ENCODE measurements at regions of chr1 and their contacts with region 1.

Region 1: DNA sequence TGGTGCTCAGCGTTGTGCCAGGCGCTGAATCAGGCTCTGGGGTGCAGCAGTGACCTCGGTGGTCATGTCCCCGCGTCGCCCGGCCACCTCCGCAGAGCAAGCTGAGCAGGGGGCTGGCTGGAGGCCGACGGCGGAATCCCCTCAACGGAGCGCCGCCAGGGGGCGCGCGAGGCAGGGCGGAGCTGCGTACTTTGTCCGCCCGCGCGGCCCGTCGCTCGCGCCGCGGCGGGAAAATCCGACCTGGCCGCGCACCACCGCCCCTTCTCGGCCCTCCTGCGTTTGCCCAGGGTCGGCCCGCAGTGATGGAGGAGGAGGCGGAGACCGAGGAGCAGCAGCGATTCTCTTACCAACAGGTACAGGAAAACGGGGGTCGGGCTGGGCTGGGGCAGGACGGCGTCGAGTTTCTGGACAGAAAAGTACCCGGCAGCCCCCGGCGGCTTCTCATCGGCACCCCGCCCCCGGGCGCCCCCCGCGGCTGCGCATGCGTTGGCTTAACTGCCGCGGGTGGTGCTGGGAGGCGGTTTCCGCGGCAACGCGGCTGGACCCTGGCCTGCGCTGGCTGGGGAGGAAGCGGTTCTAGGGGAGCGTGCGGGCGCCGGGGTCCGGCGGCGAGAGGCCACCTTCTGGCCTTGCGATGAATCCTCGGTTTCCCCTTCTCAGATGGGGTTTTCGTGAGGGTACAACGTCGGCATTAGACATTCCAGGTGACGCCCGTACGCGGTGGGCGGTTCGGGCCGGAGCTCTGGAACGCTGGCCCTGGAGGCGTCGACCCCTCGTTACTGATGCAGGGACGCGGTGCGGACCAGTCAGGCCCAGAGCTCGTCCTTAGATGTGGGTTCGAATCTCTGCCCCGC is at the start of gene CENPS:
- DNase-seq: peak; percentile 83
- H3K4me3 ChIP-seq: peak within 1 kb of the TSS; percentile 66 to 86
- H3K27ac ChIP-seq: peak within 1 kb of the TSS; percentile 66 to 74
- H3K4me1 ChIP-seq: peaks cover 5% of the 10 kb centered on the region
- H3K27me3 ChIP-seq: no peaks in the 10 kb centered on the region
- CTCF ChIP-seq: peak; percentile 98 to 99 (median 98)
- POLR2A ChIP-seq: peak; percentile 33
- total RNA-seq, gene CENPS: 21.8 to 34.8 TPM

Region 2: DNA sequence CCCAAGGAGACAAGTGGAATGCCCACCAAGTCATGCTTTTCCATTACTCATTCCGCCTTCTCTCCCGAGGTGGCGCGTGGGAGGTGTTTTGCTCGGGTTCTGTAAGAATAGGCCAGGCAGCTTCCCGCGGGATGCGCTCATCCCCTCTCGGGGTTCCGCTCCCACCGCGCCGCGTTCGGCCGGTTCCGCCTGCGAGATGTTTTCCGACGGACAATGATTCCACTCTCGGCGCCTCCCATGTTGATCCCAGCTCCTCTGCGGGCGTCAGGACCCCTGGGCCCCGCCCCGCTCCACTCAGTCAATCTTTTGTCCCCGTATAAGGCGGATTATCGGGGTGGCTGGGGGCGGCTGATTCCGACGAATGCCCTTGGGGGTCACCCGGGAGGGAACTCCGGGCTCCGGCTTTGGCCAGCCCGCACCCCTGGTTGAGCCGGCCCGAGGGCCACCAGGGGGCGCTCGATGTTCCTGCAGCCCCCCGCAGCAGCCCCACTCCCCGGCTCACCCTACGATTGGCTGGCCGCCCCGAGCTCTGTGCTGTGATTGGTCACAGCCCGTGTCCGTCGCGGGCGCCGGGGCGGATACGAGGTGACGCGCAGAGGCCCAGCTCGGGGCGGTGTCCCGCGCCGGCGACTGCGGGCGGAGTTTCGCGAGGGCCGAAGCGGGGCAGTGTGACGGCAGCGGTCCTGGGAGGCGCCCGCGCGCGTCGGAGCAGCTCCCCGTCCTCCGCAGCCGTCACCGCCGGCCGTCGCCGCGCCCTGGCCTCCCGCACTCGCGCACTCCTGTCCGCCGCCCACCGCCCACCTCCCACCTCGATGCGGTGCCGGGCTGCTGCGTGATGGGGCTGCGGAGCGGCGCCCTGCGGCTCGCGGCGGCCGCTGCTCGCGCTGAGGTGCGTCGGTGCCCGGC is 220.3 kb before region 1 on chr1 and contains the start of gene KIF1B:
- intact Hi-C with region 1: loop called (anchors 5 kb)
- DNase-seq: peak; percentile 99
- H3K4me3 ChIP-seq: peak within 1 kb of the TSS; percentile 87 to 93
- H3K27ac ChIP-seq: peak within 1 kb of the TSS; percentile 96 to 99
- H3K4me1 ChIP-seq: peaks cover 3% of the 10 kb centered on the region
- H3K27me3 ChIP-seq: no peaks in the 10 kb centered on the region
- CTCF ChIP-seq: peak; percentile 99 to 100 (median 99)
- POLR2A ChIP-seq: peak; percentile 100
- total RNA-seq, gene KIF1B: 31.3 to 56.8 TPM

Region 3: DNA sequence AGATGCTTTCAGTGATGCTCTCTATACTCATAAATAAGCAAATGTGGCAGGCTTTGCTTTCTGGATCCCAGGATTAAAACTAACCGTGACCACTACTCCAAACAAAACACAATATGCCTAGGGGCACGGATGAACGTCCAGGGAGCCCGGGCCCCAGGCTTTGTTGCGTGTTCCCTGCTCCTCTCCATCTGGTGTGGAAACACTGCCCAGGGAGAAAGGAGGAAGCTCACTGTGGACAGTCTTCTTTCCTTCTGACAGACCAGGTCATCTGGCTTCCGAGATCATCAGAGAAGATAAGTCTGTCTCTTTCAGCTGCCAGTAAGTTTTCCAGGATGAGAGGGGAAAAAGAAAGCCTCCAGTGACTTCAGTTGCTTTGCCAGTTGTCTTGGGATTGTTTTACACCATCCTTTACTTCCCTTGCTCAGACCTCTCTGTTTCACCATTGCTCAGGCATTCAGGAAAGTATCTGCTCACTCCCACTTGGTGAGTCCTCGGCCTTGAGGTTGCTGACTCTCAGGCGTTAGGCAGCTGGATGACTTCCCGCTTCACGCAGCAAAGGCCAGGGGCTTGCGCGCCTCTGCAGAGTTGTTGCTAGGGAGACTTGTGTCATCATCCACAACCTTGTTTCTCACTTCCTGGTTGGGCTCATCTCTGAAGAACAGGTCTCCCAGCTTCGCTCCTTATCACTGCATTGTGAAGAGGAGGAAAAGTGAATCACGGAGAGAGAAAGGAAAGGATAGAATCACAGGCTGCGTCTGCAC is 52.2 kb before region 1 on chr1:
- intact Hi-C with region 1: loop called (anchors 1 kb)
- DNase-seq: no peak
- H3K4me3 ChIP-seq: no peak overlapping the region
- H3K27ac ChIP-seq: no peak overlapping the region
- H3K4me1 ChIP-seq: no peaks in the 10 kb centered on the region
- H3K27me3 ChIP-seq: no peaks in the 10 kb centered on the region
- CTCF ChIP-seq: no peak
- POLR2A ChIP-seq: no peak

Region 4: DNA sequence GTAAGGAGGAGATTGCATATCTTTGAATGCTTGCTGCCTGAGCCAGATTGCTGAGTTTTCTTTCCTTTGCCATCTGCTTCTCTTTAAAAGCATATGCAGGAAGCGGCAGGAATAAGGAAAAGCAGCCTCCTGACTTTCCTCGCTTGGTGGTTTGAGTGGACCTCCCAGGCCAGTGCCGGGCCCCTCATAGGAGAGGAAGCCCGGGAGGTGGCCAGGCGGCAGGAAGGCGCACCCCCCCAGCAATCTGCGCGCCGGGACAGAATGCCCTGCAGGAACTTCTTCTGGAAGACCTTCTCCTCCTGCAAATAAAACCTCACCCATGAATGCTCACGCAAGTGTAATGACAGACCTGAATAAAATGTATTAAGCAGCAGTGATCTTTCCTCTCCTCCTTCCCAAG is 20.8 kb after region 1 on chr1:
- intact Hi-C with region 1: no loop called
- DNase-seq: no peak
- H3K4me3 ChIP-seq: no peak overlapping the region
- H3K27ac ChIP-seq: no peak overlapping the region
- H3K4me1 ChIP-seq: no peaks in the 10 kb centered on the region
- H3K27me3 ChIP-seq: no peaks in the 10 kb centered on the region
- CTCF ChIP-seq: no peak
- POLR2A ChIP-seq: no peak

Region 5: DNA sequence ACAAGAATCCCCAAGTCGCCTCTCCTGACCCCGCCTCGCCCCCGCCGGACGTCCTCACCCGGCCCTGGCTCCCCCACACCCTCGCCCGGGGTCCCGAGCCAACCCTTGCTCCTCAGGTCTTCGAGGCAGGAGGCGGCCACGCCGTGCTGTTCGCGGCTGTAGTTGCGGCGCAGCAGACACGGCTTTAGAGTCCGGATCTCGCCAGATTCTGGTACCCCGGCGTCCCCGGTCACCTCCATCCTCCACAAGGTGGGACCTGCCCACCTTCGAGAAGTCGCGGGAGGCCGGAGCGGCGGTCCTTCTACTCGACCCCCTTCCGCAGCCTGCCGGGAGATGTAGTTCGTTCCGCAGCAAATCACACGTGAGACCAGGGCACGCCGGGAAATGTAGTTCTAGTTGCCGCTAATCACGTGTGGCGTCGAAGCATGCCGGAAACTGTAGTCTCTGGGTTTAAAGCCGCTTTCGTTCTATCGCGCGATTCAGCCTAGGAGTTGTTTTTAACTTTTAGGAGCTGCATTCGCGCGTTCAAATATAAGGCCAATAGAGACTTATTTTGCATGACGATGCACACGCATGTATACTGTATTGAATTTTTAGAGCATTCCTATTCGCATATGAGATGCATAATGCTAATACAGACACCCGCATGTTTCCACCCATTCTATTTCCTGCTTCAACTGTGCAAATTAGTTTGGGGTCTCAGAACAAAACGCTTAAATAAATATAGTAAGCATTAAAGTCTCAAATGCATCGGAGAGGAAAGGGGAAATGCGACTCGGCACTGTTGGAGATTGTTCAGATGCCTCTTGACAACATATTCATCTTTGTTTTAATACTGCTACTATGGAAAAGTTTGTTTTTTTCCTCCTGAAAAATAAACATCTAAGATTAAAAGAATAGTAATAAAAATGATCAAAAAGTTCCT is 42.0 kb after region 1 on chr1 and contains the start of gene DFFA:
- intact Hi-C with region 1: loop called (anchors 5 kb)
- DNase-seq: peak; percentile 94
- H3K4me3 ChIP-seq: peak within 1 kb of the TSS; percentile 42 to 63
- H3K27ac ChIP-seq: peak within 1 kb of the TSS; percentile 47 to 62
- H3K4me1 ChIP-seq: peaks cover 8% of the 10 kb centered on the region
- H3K27me3 ChIP-seq: no peaks in the 10 kb centered on the region
- CTCF ChIP-seq: no peak
- POLR2A ChIP-seq: peak; percentile 63
- total RNA-seq, gene DFFA: 24.8 to 35.5 TPM

Region 6: GRCh38 chr1:10494754-10495474 is 64.5 kb after region 1 on chr1:
- intact Hi-C with region 1: loop called (anchors 1 kb)
- DNase-seq: peak; percentile 76
- H3K4me3 ChIP-seq: no peak overlapping the region
- H3K27ac ChIP-seq: peak overlapping the region; percentile 86 to 90
- H3K4me1 ChIP-seq: peaks cover 7% of the 10 kb centered on the region
- H3K27me3 ChIP-seq: no peaks in the 10 kb centered on the region
- CTCF ChIP-seq: peak; percentile 93 to 97 (median 95)
- POLR2A ChIP-seq: no peak